PC-3 (cell line): ENCODE measurements at regions of chr18 and their contacts with region 1.

Region 1: DNA sequence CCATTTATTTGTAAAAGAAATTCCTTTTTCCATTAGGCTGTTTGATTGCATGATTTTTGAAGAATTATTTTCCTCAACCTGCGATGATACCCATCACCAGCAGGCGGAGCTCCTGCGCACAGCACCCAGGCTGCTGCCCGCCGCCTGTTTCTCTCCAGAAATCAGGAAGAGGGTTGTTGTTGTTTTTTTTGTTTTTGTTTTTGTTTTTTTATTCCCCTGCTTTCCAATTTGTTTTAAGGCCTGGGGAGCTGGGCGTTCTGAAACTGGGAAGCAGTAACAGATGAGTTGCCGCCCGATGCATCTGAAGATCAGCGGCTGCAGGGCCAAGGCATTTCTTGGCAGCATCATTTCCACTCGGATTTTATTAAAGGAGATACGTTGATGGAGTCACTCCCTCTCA is 132.1 kb downstream of the MBP start:
- DNase-seq: peak; percentile 60
- ATAC-seq: peak; percentile 58
- H3K4me3 ChIP-seq: peak overlapping the region; percentile 54
- H3K27ac ChIP-seq: no peak overlapping the region
- H3K4me1 ChIP-seq: 0 out of 2 replicates have a peak, but pooled peaks cover 4% of the 10 kb centered on the region
- H3K27me3 ChIP-seq: no peaks in the 10 kb centered on the region
- CTCF ChIP-seq: peak; percentile 92

Region 2: GRCh38 chr18:77054606-77055428 is 54.3 kb after region 1 on chr18:
- CTCF ChIA-PET with region 1: interaction called, 3 read pairs
- POLR2A ChIA-PET with region 1: no interaction called
- intact Hi-C with region 1: loop called (anchors 1 kb)
- DNase-seq: peak; percentile 93
- ATAC-seq: peak; percentile 92
- H3K4me3 ChIP-seq: peak overlapping the region; percentile 54
- H3K27ac ChIP-seq: peak overlapping the region; percentile 98
- H3K4me1 ChIP-seq: peaks cover 32% of the 10 kb centered on the region
- H3K27me3 ChIP-seq: no peaks in the 10 kb centered on the region
- CTCF ChIP-seq: peak; percentile 85

Region 3: GRCh38 chr18:77207540-77207939 is 207.0 kb after region 1 on chr18:
- CTCF ChIA-PET with region 1: interaction called, 5 read pairs
- POLR2A ChIA-PET with region 1: no interaction called
- intact Hi-C with region 1: loop called (anchors 1 kb)
- DNase-seq: peak; percentile 47
- ATAC-seq: no peak
- H3K4me3 ChIP-seq: no peak overlapping the region
- H3K27ac ChIP-seq: no peak overlapping the region
- H3K4me1 ChIP-seq: peaks cover 19% of the 10 kb centered on the region
- H3K27me3 ChIP-seq: no peaks in the 10 kb centered on the region
- CTCF ChIP-seq: peak; percentile 64